IMR-90 (cell line): ENCODE measurements at regions of chr16 and their contacts with region 1.

Region 1: GRCh38 chr16:83137326-83137770 is 510.6 kb downstream of the CDH13 start:
- DNase-seq: peak; percentile 83
- ATAC-seq: peak; percentile 84
- H3K4me3 ChIP-seq: peak overlapping the region; percentile 46
- H3K27ac ChIP-seq: peak overlapping the region; percentile 26; the same call in 1 of the 2 replicates
- H3K4me1 ChIP-seq: peaks cover 11% of the 10 kb centered on the region
- H3K27me3 ChIP-seq: no peaks in the 10 kb centered on the region
- CTCF ChIP-seq: no peak
- POLR2A ChIP-seq: no peak
- RAD21 ChIP-seq: 0 out of 2 replicates have a peak, but pooled peaks have one; percentile 2

Region 2: GRCh38 chr16:82639666-82640336 is 497.5 kb before region 1 on chr16:
- CTCF ChIA-PET with region 1: no interaction called
- POLR2A ChIA-PET with region 1: no interaction called
- dilution Hi-C with region 1: no loop called
- in situ Hi-C with region 1: no loop called
- intact Hi-C with region 1: loop called (anchors 10 kb)
- DNase-seq: peak; percentile 58
- ATAC-seq: peak; percentile 74
- H3K4me3 ChIP-seq: no peak overlapping the region
- H3K27ac ChIP-seq: no peak overlapping the region
- H3K4me1 ChIP-seq: peaks cover 17% of the 10 kb centered on the region
- H3K27me3 ChIP-seq: no peaks in the 10 kb centered on the region
- CTCF ChIP-seq: peak; percentile 74
- POLR2A ChIP-seq: no peak
- RAD21 ChIP-seq: peak; percentile 62

Region 3: GRCh38 chr16:83356266-83356665 is 218.9 kb after region 1 on chr16:
- CTCF ChIA-PET with region 1: no interaction called
- POLR2A ChIA-PET with region 1: no interaction called
- dilution Hi-C with region 1: no loop called
- in situ Hi-C with region 1: no loop called
- intact Hi-C with region 1: loop called (anchors 10 kb)
- DNase-seq: peak; percentile 65
- ATAC-seq: peak; percentile 81
- H3K4me3 ChIP-seq: no peak overlapping the region
- H3K27ac ChIP-seq: no peak overlapping the region
- H3K4me1 ChIP-seq: no peaks in the 10 kb centered on the region
- H3K27me3 ChIP-seq: no peaks in the 10 kb centered on the region
- CTCF ChIP-seq: peak; percentile 62
- POLR2A ChIP-seq: no peak
- RAD21 ChIP-seq: peak; percentile 67